Heart right ventricle (tissue), 16 donors: ENCODE measurements at regions of chr17 and their contacts with region 1.

Region 1: GRCh38 chr17:40854159-40854814 is 12.7 kb downstream of the KRT12 start:
- DNase-seq: no peak
- ATAC-seq: peak in 1 of 8 donors; percentile 62
- H3K4me3 ChIP-seq: no peak overlapping the region
- H3K27ac ChIP-seq: no peak overlapping the region
- H3K4me1 ChIP-seq: peaks cover 0 to 14% (median 0%) of the 10 kb centered on the region in 9 donors
- H3K27me3 ChIP-seq: peaks cover 0 to 16% (median 0%) of the 10 kb centered on the region in 7 donors
- CTCF ChIP-seq: no peak

Region 2: DNA sequence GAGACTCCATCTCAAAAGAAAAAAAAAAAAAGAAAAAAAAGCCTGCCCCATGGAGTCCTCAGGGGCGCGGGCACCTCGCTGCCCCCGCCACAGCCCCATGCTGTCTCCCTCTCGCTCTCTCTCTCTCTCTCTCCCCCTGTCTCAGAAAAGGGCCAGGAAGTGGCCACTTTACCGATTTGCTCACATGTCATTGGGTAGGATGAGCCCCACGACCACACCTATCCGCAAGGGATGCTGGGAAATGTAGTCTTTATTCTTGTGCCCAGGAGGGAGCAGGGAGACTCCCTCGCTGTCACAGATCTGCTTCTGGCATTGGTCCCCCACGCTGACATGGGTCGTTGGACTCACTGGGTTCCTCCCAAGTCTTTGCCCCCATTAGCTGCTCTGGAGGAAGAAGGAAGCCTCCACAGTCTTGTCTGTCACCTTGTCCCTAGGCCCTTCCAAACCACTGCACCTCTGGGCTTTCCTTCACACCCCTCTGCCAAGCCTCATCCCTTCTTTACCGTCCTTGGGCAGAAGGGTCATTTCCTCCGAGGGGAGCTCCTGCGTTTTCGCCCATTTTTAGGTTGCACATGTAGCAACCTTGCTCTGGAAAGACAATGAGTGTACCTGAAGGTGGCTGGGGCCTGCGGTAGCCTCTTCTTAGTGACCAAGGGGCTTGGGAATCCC is 482.9 kb before region 1 on chr17:
- intact Hi-C with region 1: no loop called
- DNase-seq: no peak
- ATAC-seq: peak in 2 of 8 donors; percentile 28 to 34
- H3K4me3 ChIP-seq: no peak overlapping the region
- H3K27ac ChIP-seq: no peak overlapping the region
- H3K4me1 ChIP-seq: no peaks in the 10 kb centered on the region
- H3K27me3 ChIP-seq: peaks cover 0 to 2% (median 0%) of the 10 kb centered on the region in 7 donors
- CTCF ChIP-seq: no peak

Region 3: DNA sequence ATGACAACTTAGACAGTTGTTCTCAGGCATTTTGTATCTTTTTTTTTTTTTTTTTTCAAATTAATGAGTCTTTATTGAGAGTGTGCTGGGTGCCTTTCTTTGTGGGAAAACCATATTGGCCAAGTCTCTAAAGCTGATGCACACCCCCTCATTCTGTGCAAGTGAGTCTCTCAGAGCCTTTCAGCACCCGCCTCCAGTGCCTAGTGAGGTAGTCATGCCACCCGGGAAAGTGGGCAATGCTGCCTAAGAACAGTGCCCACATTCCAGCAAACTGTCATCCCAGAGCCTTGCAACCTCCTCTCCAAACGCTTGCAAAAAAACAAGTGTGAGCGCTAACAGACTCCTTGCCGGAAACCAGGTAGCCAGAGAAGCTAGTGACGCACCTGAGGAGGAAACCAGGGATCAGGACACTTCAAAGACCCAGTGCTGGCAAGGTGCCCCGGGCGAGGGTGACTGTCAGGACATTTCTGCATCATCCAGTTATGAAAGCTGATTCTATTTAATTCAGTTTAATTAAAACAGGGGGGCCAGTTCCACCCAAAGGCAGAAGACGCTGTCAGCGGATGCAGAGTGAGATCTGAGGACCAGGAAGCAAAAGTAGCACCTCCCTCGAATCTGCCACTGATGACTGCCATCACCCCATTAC is 241.6 kb before region 1 on chr17:
- intact Hi-C with region 1: no loop called
- DNase-seq: no peak
- ATAC-seq: no peak
- H3K4me3 ChIP-seq: no peak overlapping the region
- H3K27ac ChIP-seq: peak overlapping the region in 1 of 10 donors; percentile 75
- H3K4me1 ChIP-seq: peaks cover 0 to 11% (median 0%) of the 10 kb centered on the region in 9 donors
- H3K27me3 ChIP-seq: peaks cover 4 to 36% (median 9%) of the 10 kb centered on the region in 7 donors
- CTCF ChIP-seq: no peak

Region 4: GRCh38 chr17:40699371-40699770 is 154.9 kb before region 1 on chr17:
- intact Hi-C with region 1: no loop called
- DNase-seq: no peak
- ATAC-seq: no peak
- H3K4me3 ChIP-seq: no peak overlapping the region
- H3K27ac ChIP-seq: no peak overlapping the region
- H3K4me1 ChIP-seq: peaks cover 0 to 7% (median 0%) of the 10 kb centered on the region in 9 donors
- H3K27me3 ChIP-seq: peaks cover 0 to 52% (median 32%) of the 10 kb centered on the region in 7 donors
- CTCF ChIP-seq: no peak

Region 5: GRCh38 chr17:40803617-40804082 is 50.6 kb before region 1 on chr17:
- intact Hi-C with region 1: loop called in 2 of 10 experiments (anchors 5 kb)
- DNase-seq: peak; percentile 71 to 74
- ATAC-seq: peak in 7 of 8 donors; percentile 67 to 94 (median 82)
- H3K4me3 ChIP-seq: no peak overlapping the region
- H3K27ac ChIP-seq: no peak overlapping the region
- H3K4me1 ChIP-seq: peaks cover 0 to 8% (median 3%) of the 10 kb centered on the region in 9 donors
- H3K27me3 ChIP-seq: peaks cover 0 to 78% (median 20%) of the 10 kb centered on the region in 7 donors
- CTCF ChIP-seq: peak; percentile 49 to 92 (median 83)

Region 6: DNA sequence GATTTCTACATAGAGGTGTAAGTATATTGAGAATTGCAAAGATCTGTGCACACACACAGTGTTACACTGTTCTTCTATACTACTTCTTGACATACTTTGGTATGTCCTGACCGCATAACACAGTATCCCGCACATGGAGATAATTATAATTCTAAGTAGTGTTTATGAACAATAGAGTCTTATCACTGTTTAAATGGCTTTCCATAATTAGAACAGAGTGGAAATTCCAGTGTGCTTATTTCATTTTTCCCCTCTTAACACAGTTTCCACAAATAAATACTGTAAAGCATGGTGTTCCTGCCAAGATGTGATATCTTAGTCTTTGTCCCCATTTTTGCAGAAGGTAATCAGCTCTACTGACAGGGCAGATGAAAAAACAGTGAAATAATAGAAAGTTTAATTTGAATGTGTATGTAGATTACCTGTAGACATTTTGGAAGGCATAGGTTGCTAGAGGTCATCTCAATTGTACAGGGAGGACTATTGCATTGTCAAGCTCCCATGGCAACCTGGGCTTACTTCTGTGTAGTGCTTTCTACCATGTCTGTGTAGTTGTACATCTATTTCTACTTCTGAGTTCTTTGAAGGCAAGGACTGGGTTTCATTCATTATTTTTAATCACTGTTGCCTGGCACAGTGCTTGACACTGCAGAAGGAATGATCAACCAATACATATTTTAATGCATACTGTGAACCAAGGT is 44.4 kb before region 1 on chr17:
- intact Hi-C with region 1: loop called in 1 of 10 experiments (anchors 5 kb)
- DNase-seq: no peak
- ATAC-seq: peak; percentile 47 to 93 (median 69)
- H3K4me3 ChIP-seq: no peak overlapping the region
- H3K27ac ChIP-seq: peak overlapping the region in 7 of 10 donors; percentile 4 to 58 (median 47)
- H3K4me1 ChIP-seq: peaks cover 0 to 31% (median 22%) of the 10 kb centered on the region in 9 donors
- H3K27me3 ChIP-seq: peaks cover 0 to 85% (median 0%) of the 10 kb centered on the region in 7 donors
- CTCF ChIP-seq: no peak

Region 7: GRCh38 chr17:40932608-40933007 is 78.3 kb after region 1 on chr17:
- intact Hi-C with region 1: no loop called
- DNase-seq: no peak
- ATAC-seq: no peak
- H3K4me3 ChIP-seq: no peak overlapping the region
- H3K27ac ChIP-seq: no peak overlapping the region
- H3K4me1 ChIP-seq: no peaks in the 10 kb centered on the region
- H3K27me3 ChIP-seq: peaks cover 0 to 31% (median 5%) of the 10 kb centered on the region in 7 donors
- CTCF ChIP-seq: no peak

Region 8: DNA sequence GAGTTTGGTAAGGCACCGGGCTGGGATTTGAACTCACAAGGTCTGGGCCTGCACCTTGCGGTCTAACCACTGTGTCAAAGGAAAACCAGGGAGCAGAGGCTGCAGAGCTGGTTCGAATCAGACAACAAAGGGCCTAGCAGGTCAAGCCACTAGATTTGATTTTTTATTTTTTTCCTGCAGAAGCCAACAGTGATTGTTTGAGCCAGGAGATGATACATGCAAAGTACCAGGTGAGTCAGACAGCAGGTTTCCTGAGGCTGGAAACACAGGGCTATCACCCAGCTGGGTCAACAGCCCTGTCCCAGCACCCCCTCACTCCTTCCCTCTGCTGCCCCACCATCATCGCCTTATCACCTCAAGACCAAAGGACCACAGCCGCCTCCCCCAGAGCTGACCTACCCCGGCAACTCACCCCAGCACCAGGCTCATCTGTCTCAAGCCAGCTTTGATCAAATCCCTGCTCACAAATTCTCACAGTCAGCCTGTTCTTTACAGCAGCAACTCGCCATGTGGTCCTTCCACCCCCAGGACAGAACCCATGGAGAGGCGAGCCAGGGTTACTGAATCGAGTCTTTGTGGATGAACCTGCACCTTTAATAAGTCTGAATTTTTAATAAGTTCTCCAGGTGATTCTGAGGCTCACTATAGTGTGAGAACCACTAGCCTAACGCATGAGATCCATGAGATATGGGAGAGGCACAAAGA is 686.8 kb after region 1 on chr17:
- intact Hi-C with region 1: loop called in 2 of 10 experiments (anchors 1 to 5 kb)
- DNase-seq: no peak
- ATAC-seq: no peak
- H3K4me3 ChIP-seq: no peak overlapping the region
- H3K27ac ChIP-seq: no peak overlapping the region
- H3K4me1 ChIP-seq: no peaks in the 10 kb centered on the region
- H3K27me3 ChIP-seq: peaks cover 0 to 23% (median 15%) of the 10 kb centered on the region in 7 donors
- CTCF ChIP-seq: no peak